PC-9 (cell line): ENCODE measurements at regions of chr4 and their contacts with region 1.

Region 1: DNA sequence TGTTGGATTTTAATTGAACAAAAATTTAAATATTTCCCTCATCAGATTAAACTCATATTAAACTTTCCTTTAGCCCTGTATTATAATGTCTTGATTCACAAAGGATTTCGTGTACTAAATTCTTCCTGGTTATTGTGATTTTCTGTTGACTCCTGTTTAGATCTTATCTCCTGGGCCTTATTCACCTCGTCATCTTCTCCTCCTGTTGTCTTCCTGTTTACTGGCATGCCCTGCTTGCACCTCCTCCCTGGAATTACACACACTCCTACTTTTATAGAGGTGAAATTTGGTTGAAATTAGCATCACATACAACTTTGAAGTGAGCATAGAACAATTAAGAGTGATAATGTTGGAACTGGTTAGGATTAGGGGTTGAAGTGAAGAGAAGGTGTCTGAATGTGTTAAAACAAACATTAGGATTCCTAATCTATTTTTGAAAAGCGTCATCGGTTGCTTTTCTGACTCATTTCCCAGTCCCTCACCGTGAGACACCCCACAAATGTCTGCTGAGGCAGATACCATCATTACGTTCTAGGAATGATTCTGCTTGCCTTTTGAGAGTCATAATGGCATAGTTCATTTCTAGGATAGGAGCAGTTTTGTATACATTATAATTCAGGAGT is 32.5 kb downstream of the TLL1 start:
- DNase-seq: peak; percentile 16 to 36
- H3K4me3 ChIP-seq: no peak overlapping the region
- H3K27ac ChIP-seq: peak overlapping the region; percentile 53
- H3K4me1 ChIP-seq: peaks cover 15% of the 10 kb centered on the region
- H3K27me3 ChIP-seq: no peaks in the 10 kb centered on the region
- CTCF ChIP-seq: no peak

Region 2: GRCh38 chr4:166012129-166013078 is 106.9 kb after region 1 on chr4:
- CTCF ChIA-PET with region 1: no interaction called
- POLR2A ChIA-PET with region 1: no interaction called
- intact Hi-C with region 1: loop called (anchors 10 kb)
- DNase-seq: peak in 1 of 2 experiments; percentile 41
- H3K4me3 ChIP-seq: no peak overlapping the region
- H3K27ac ChIP-seq: peak overlapping the region; percentile 31; the same call in 1 of the 2 replicates
- H3K4me1 ChIP-seq: peaks cover 10% of the 10 kb centered on the region
- H3K27me3 ChIP-seq: no peaks in the 10 kb centered on the region
- CTCF ChIP-seq: no peak